ENCODE measurements at regions of chr2 and their contacts with region 1.

Region 1: DNA sequence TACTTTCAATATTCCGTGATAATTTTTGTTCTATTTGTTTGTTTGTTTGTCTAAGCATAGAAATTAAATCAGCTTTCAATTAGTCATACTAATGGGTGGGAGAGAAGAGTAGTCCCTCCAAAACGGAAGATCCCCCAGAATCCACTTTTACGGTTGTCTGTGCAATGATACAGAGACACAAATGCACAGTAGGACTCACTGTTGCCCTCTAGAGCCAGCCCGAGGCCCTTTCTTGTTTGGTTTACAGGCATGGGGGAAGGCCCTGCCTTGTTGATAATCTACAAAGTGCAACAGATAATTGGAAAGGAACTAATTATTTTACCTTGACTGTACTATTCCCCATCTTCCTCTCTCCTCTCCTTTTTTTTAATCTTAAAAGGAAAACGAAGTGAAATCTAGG is 121.1 kb downstream of the ACOXL start:
- DNase-seq: no peak
- H3K4me3 ChIP-seq: no peak overlapping the region
- H3K27ac ChIP-seq: no peak overlapping the region
- H3K4me1 ChIP-seq: no peaks in the 10 kb centered on the region
- H3K27me3 ChIP-seq: no peaks in the 10 kb centered on the region
- CTCF ChIP-seq: no peak
- POLR2A ChIP-seq: no peak

Region 2: GRCh38 chr2:109613922-109614714 is 1239.4 kb before region 1 on chr2 and contains the starts of genes SEPTIN10 and SOWAHC:
- intact Hi-C with region 1: no loop called
- DNase-seq: peak; percentile 93 to 95
- H3K4me3 ChIP-seq: peak within 1 kb of the TSS; percentile 65 to 96 (median 86)
- H3K27ac ChIP-seq: peak within 1 kb of the TSS; percentile 99
- H3K4me1 ChIP-seq: peaks cover 0 to 24% of the 10 kb centered on the region in 2 donors
- H3K27me3 ChIP-seq: no peaks in the 10 kb centered on the region
- CTCF ChIP-seq: no peak
- POLR2A ChIP-seq: peak; percentile 74
- total RNA-seq, gene SEPTIN10: 93.5 to 116 (median 100) TPM
- total RNA-seq, gene SOWAHC: 9.1 to 18.4 (median 14.7) TPM

Region 3: GRCh38 chr2:110794390-110794789 is 59.1 kb before region 1 on chr2:
- intact Hi-C with region 1: loop called (anchors 2 kb)
- DNase-seq: no peak
- H3K4me3 ChIP-seq: no peak overlapping the region
- H3K27ac ChIP-seq: no peak overlapping the region
- H3K4me1 ChIP-seq: no peaks in the 10 kb centered on the region
- H3K27me3 ChIP-seq: peaks cover 0 to 28% of the 10 kb centered on the region in 2 donors
- CTCF ChIP-seq: no peak
- POLR2A ChIP-seq: no peak